ENCODE measurements at regions of chr1 and their contacts with region 1.

Region 1: GRCh38 chr1:1250786-1251284 is 4.3 kb upstream of the C1QTNF12 start:
- DNase-seq: no peak

Region 2: DNA sequence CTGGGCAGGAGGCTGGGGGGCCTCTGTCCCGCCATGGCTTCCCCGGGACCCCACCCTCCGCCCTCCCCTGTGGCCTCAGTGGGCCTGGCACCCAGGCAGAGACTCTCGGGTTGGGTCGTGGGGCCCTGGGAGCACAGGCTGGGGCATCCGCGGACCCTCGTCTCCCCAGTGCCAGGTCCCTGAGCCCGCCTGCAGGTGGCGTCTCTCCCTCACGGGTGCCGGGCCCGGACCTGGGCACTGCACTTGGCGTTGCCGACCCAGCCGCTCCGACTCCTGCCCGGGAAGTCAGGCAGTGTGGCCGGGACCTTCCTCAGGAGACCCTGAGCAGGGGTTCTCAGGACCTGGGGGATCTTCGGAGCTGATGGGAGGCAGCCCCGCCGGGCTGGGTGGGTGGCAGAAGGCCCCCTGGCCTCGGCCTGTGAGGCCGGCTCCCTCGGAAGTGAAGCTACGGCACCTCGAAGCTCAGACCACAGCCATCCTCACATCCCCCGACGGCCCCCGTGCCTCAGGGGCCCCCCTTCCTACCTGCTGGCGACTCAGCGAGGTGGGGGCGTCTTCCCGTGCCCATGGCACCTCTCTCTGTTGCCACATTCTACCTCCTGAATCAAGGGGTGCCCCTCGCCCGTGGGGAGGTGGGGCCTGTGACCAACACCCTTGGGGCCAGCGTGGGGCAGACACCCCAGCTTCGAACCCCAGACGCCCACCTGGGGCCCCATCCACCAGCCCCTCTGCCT is 128.6 kb before region 1 on chr1:
- intact Hi-C with region 1: loop called (anchors 5 kb)
- DNase-seq: peak; percentile 63 to 94 (median 87)

Region 3: DNA sequence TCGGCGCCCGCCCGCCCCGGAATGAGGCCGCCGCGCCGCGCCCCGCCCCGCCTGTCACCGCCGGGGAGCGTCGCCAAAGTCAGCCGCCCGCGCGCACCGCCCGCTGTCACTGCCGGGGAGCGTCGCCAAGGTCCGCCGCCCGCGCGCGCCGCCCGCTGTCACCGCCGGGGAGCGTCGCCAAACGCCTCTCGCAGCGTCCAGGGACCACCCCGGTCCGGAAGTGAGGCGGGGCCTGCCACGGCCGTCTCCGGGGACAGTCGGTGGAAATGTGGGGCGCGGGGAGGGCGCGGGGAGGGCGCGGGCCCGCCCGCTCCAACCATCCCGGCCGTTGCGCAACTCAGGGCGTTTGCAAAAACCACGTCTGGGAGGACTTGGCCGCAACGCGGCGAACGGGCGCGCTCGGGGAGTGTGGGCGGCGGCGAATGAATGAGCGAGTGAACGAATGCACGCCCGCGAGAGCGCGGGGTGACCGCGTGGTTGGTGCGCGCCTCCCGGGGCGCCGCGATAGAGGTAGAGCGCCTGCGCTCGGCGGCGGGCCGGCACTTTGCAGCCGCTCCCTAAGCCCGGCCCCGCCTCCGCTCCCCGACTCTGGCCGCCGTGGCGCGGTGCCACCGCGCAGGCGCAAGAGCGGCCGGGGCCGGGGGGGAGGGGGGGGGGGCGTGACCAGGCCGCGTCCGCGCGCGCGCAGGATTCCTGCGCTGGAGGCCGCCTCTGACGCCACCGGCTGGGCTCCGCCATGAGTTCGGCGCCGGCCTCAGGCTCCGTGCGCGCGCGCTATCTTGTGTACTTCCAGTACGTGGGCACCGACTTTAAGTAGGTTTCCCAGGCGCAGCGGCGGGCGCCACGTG is 57.3 kb after region 1 on chr1 and contains the starts of genes ACAP3 and PUSL1:
- intact Hi-C with region 1: no loop called
- DNase-seq: peak; percentile 73 to 95 (median 88)

Measured in head of caudate nucleus (tissue), 42 donors.